Left cardiac atrium (tissue), 4 donors: ENCODE measurements at regions of chr9 and their contacts with region 1.

Region 1: GRCh38 chr9:92289708-92290390 is 3.6 kb downstream of the IARS1 start:
- DNase-seq: no peak
- ATAC-seq: no peak

Region 2: DNA sequence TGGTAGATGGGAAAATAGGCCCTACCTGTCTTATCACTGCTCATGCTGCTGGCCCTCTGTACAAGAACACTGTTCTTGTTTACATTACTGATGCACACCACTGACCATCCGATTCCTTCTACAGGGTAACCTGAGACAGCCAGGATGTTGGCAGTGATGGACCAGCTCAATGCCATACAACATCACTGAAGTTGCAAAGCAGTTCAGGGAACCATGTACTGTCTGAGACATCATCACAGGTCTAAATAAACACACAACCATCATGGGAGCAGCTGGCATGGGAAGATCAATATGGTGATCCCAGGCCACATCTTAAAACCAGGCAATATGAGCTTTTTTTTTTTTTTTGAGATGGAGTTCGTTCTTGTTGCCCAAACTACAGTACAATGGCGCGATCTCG is 55.3 kb before region 1 on chr9:
- intact Hi-C with region 1: loop called in 1 of 2 experiments (anchors 10 kb)
- DNase-seq: no peak
- ATAC-seq: no peak

Region 3: GRCh38 chr9:92535940-92536850 is 246.3 kb after region 1 on chr9 and contains the start of gene ECM2:
- intact Hi-C with region 1: no loop called
- DNase-seq: no peak
- ATAC-seq: peak; percentile 67 to 75
- total RNA-seq, gene ECM2: 14.4 to 17.6 TPM